ENCODE measurements at regions of chr10 and their contacts with region 1.

Region 1: GRCh38 chr10:74092372-74092771 is 58.3 kb downstream of the AP3M1 start:
- DNase-seq: no peak
- H3K4me3 ChIP-seq: no peak overlapping the region
- H3K27me3 ChIP-seq: no peaks in the 10 kb centered on the region
- CTCF ChIP-seq: no peak

Region 2: GRCh38 chr10:73894245-73894971 is 198.0 kb before region 1 on chr10:
- CTCF ChIA-PET with region 1: no interaction called
- POLR2A ChIA-PET with region 1: no interaction called
- DNase-seq: no peak
- H3K4me3 ChIP-seq: no peak overlapping the region
- H3K27me3 ChIP-seq: no peaks in the 10 kb centered on the region
- CTCF ChIP-seq: no peak

Region 3: GRCh38 chr10:74103560-74104248 is 11.3 kb after region 1 on chr10:
- CTCF ChIA-PET with region 1: interaction called, 3 read pairs
- POLR2A ChIA-PET with region 1: interaction called, 13 read pairs
- DNase-seq: no peak
- H3K4me3 ChIP-seq: no peak overlapping the region
- H3K27me3 ChIP-seq: no peaks in the 10 kb centered on the region
- CTCF ChIP-seq: peak; percentile 51

Measured in BJ (cell line).